Naive thymus-derived CD4-positive, alpha-beta T cell (primary cell): ENCODE measurements at regions of chr4 and their contacts with region 1.

Region 1: GRCh38 chr4:101187841-101188240 is 159.5 kb downstream of the PPP3CA start:
- DNase-seq: peak in 4 of 9 donors; percentile 7 to 27 (median 15)
- ATAC-seq: peak; percentile 42
- H3K4me3 ChIP-seq: no peak overlapping the region
- H3K4me3 Mint-ChIP-seq: peak overlapping the region in 1 of 10 donors; percentile 25
- H3K27ac ChIP-seq: no peak overlapping the region
- H3K27ac Mint-ChIP-seq: no peak overlapping the region
- H3K4me1 ChIP-seq: no peaks in the 10 kb centered on the region
- H3K4me1 Mint-ChIP-seq: peaks cover 7 to 41% (median 17%) of the 10 kb centered on the region in 7 donors
- H3K27me3 ChIP-seq: no peaks in the 10 kb centered on the region
- H3K27me3 Mint-ChIP-seq: no peaks in the 10 kb centered on the region

Region 2: DNA sequence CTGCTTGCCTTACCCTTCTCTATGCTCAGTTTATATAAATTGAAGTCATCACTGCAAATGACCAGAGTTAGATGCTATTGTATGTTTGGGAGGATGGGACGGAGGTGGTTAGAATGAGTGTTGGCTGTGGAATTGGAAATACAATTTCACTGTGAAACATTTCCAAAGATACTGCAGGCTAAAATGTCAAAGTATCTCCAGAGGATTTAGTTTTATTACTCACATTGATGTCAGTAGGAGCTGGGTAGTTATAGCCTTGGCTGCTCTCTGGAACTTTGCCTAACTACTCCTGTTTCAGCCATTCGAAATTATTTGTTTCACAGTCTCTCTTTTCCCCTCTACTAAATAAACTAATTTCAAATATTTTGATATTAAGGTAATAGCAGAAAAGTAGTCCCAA is 252.1 kb after region 1 on chr4:
- CTCF ChIA-PET with region 1: no interaction called
- POLR2A ChIA-PET with region 1: no interaction called
- intact Hi-C with region 1: loop called in 1 of 2 experiments (anchors 1 kb)
- DNase-seq: no peak
- ATAC-seq: no peak
- H3K4me3 ChIP-seq: no peak overlapping the region
- H3K4me3 Mint-ChIP-seq: no peak overlapping the region
- H3K27ac ChIP-seq: no peak overlapping the region
- H3K27ac Mint-ChIP-seq: no peak overlapping the region
- H3K4me1 ChIP-seq: no peaks in the 10 kb centered on the region
- H3K4me1 Mint-ChIP-seq: peaks cover 0 to 2% (median 0%) of the 10 kb centered on the region in 7 donors
- H3K27me3 ChIP-seq: no peaks in the 10 kb centered on the region
- H3K27me3 Mint-ChIP-seq: peaks cover 17 to 31% (median 21%) of the 10 kb centered on the region in 5 donors